Activated CD4-positive, alpha-beta memory T cell treated with anti-CD3 and anti-CD28 coated beads for 36 hours (primary cell): ENCODE measurements at regions of chr1 and their contacts with region 1.

Region 1: GRCh38 chr1:228500901-228501871 is 14.0 kb downstream of the RNF187 start:
- DNase-seq: peak; percentile 96
- H3K4me3 Mint-ChIP-seq: peak overlapping the region; percentile 28
- H3K27ac Mint-ChIP-seq: peak overlapping the region; percentile 30
- H3K4me1 Mint-ChIP-seq: peaks cover 25% of the 10 kb centered on the region
- H3K27me3 Mint-ChIP-seq: no peaks in the 10 kb centered on the region

Region 2: DNA sequence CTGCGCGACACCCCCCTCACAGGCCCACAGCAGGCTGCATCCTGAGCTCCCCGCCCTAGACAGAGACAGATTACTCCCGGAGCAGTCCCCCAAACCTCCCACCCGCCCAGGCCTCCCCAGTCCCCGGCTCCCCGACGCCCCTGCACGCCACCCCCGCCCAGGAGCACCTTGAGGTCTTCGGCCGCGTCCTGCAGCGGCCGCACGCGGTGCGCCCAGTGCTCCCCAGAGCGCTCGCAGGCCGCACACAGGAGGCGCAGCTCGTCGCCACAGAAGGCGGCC is 95.3 kb before region 1 on chr1:
- CTCF ChIA-PET with region 1: interaction called, 4 read pairs
- POLR2A ChIA-PET with region 1: interaction called, 3 read pairs
- intact Hi-C with region 1: loop called (anchors 1 kb)
- DNase-seq: no peak
- H3K4me3 Mint-ChIP-seq: peak overlapping the region; percentile 83
- H3K27ac Mint-ChIP-seq: peak overlapping the region; percentile 71
- H3K4me1 Mint-ChIP-seq: peaks cover 43% of the 10 kb centered on the region
- H3K27me3 Mint-ChIP-seq: no peaks in the 10 kb centered on the region

Region 3: GRCh38 chr1:228471762-228472398 is 29.3 kb before region 1 on chr1:
- CTCF ChIA-PET with region 1: interaction called, 17 read pairs
- POLR2A ChIA-PET with region 1: no interaction called
- intact Hi-C with region 1: no loop called
- DNase-seq: peak; percentile 32
- H3K4me3 Mint-ChIP-seq: no peak overlapping the region
- H3K27ac Mint-ChIP-seq: no peak overlapping the region
- H3K4me1 Mint-ChIP-seq: peaks cover 7% of the 10 kb centered on the region
- H3K27me3 Mint-ChIP-seq: peaks cover 6% of the 10 kb centered on the region

Region 4: DNA sequence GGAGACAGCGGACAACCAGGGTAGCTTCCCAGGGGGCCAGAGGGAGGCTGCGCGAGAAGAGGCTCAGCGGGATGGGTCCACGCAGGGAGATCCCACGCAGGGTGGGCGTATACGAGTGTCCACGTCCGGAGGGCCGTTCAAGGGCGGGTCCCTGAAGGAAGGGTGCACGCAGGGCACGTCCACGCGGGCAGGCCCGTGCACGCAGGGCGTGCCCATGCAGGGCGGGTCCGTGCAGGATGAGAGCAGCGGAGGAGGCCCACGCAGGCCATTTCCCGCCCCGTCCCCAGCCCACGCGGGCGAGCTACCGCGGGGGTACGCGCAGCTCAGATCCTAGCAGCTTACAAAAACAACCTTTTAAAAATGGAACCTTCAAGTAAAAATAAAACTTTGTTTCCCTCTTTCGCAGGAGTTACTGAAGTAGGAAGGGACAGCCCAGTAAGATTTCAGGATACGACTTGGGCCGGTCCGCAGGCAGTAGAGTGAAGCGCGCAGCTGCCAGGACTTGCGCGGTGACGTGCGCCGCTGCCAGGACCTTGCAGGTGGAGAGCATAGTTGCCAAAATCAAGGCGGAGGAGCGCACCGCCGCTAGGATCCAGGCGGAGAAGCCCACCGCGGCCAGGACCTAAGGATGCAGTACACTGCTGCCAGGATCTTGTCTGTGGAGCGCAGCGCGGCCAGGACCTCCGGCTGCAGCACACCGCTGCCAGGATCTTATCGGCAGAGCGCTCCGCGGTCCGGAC is 14.4 kb before region 1 on chr1:
- CTCF ChIA-PET with region 1: interaction called, 17 read pairs
- POLR2A ChIA-PET with region 1: interaction called, 5 read pairs
- intact Hi-C with region 1: no loop called
- DNase-seq: peak; percentile 85
- H3K4me3 Mint-ChIP-seq: peak overlapping the region; percentile 96
- H3K27ac Mint-ChIP-seq: peak overlapping the region; percentile 99
- H3K4me1 Mint-ChIP-seq: peaks cover 41% of the 10 kb centered on the region
- H3K27me3 Mint-ChIP-seq: no peaks in the 10 kb centered on the region